ENCODE measurements at regions of chr7 and their contacts with region 1.

Region 1: GRCh38 chr7:132654150-132654549 is 77.9 kb upstream of the PLXNA4 start:
- DNase-seq: peak; percentile 35
- ATAC-seq: peak; percentile 40
- H3K4me3 Mint-ChIP-seq: no peak overlapping the region
- H3K27ac Mint-ChIP-seq: peak overlapping the region; percentile 12
- H3K4me1 Mint-ChIP-seq: peaks cover 37% of the 10 kb centered on the region
- H3K27me3 Mint-ChIP-seq: no peaks in the 10 kb centered on the region

Region 2: GRCh38 chr7:132618956-132619305 is 35.2 kb before region 1 on chr7:
- CTCF ChIA-PET with region 1: no interaction called
- POLR2A ChIA-PET with region 1: no interaction called
- DNase-seq: no peak
- ATAC-seq: no peak
- H3K4me3 Mint-ChIP-seq: no peak overlapping the region
- H3K27ac Mint-ChIP-seq: no peak overlapping the region
- H3K4me1 Mint-ChIP-seq: peaks cover 6% of the 10 kb centered on the region
- H3K27me3 Mint-ChIP-seq: peaks cover 17% of the 10 kb centered on the region

Region 3: DNA sequence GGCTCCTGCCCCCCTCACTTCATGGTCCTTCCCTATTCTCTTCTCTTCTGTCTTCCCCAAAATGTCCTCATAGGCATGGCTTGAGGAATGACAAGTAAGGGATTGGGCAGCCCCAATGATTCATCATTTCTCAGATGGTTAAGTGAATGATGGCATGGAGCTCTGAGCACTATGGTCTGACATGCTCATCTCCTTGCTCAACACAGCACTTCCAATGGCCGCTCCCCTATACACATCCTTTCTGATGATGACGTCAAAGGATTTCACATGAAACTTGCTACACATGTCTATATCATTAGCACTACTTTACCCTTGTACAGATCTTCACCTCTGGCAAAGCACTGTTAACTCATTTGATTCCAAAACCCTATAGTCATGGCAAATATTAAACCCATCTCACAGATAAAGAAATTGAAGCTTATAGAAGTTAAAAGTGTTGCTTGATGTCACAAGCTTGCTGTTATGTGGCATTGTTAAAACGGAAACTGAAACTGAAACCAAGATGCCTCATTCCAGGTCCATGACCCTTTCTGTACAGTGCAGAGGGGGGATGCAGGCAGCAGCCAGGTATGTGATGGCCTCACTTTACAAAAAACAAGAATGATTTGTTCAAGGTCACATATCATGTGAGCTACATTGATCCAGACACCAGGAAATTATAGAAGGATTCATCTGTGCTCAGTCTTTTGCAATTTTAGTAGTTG is 12.1 kb after region 1 on chr7:
- CTCF ChIA-PET with region 1: interaction called, 29 read pairs
- POLR2A ChIA-PET with region 1: interaction called, 4 read pairs
- DNase-seq: peak; percentile 50
- ATAC-seq: peak; percentile 95
- H3K4me3 Mint-ChIP-seq: no peak overlapping the region
- H3K27ac Mint-ChIP-seq: peak overlapping the region; percentile 82
- H3K4me1 Mint-ChIP-seq: peaks cover 15% of the 10 kb centered on the region
- H3K27me3 Mint-ChIP-seq: no peaks in the 10 kb centered on the region

Region 4: DNA sequence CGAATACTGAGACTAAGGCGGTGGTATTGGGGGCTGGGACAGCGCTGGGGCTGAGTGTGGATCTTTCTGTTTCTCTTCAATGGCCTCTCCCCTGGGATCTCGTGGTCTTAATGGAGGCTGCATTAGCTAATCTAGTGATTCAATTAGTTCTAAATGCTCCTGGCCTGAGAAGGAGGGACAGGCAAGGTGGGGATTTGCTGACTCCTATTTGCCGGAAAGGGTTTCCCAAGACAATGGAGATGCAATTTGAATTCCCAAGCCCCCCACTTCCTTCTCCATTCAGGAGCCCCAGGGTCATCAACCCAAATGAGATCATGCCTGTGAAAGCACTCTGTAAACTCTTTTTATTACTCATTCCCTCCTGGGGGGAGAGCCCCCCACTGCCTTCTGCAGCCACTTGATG is 33.8 kb after region 1 on chr7:
- CTCF ChIA-PET with region 1: no interaction called
- POLR2A ChIA-PET with region 1: no interaction called
- DNase-seq: no peak
- ATAC-seq: no peak
- H3K4me3 Mint-ChIP-seq: no peak overlapping the region
- H3K27ac Mint-ChIP-seq: no peak overlapping the region
- H3K4me1 Mint-ChIP-seq: no peaks in the 10 kb centered on the region
- H3K27me3 Mint-ChIP-seq: no peaks in the 10 kb centered on the region

Region 5: GRCh38 chr7:132930881-132931280 is 276.7 kb after region 1 on chr7:
- CTCF ChIA-PET with region 1: no interaction called
- POLR2A ChIA-PET with region 1: no interaction called
- DNase-seq: no peak
- ATAC-seq: no peak
- H3K4me3 Mint-ChIP-seq: no peak overlapping the region
- H3K27ac Mint-ChIP-seq: no peak overlapping the region
- H3K4me1 Mint-ChIP-seq: no peaks in the 10 kb centered on the region
- H3K27me3 Mint-ChIP-seq: no peaks in the 10 kb centered on the region

Measured in activated CD8-positive, alpha-beta T cell treated with anti-CD3 and anti-CD28 coated beads, Interleukin-2, amount 10 ng/mL, durations not matched to agents 7 days and 5 days (primary cell).